ENCODE measurements at regions of chr2 and their contacts with region 1.

Region 1: DNA sequence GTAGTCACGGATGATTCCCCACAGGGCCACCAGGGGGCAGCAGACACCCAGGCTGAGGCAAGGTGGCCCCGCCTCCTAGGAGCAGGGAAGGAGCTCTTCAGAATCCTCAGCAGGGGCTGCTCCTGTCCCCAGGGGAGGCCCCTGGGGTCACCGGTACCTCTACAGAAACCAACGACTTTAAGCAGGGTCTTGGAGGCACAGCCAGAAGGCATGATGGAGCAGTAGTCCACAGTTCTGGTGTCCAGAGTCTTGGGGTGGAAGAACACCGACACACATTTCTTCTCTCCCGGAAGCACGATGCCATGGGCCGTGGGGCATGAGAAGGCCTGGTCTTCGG is 11.5 kb downstream of the CFAP65 start:
- DNase-seq: peak; percentile 68 to 95 (median 88)
- ATAC-seq: peak; percentile 94 to 100 (median 98)
- H3K4me3 ChIP-seq: no peak overlapping the region
- H3K27ac ChIP-seq: no peak overlapping the region
- H3K4me1 ChIP-seq: no peaks in the 10 kb centered on the region
- H3K27me3 ChIP-seq: peaks cover 0 to 5% (median 0%) of the 10 kb centered on the region in 4 donors
- CTCF ChIP-seq: peak; percentile 98 to 99 (median 98)

Region 2: DNA sequence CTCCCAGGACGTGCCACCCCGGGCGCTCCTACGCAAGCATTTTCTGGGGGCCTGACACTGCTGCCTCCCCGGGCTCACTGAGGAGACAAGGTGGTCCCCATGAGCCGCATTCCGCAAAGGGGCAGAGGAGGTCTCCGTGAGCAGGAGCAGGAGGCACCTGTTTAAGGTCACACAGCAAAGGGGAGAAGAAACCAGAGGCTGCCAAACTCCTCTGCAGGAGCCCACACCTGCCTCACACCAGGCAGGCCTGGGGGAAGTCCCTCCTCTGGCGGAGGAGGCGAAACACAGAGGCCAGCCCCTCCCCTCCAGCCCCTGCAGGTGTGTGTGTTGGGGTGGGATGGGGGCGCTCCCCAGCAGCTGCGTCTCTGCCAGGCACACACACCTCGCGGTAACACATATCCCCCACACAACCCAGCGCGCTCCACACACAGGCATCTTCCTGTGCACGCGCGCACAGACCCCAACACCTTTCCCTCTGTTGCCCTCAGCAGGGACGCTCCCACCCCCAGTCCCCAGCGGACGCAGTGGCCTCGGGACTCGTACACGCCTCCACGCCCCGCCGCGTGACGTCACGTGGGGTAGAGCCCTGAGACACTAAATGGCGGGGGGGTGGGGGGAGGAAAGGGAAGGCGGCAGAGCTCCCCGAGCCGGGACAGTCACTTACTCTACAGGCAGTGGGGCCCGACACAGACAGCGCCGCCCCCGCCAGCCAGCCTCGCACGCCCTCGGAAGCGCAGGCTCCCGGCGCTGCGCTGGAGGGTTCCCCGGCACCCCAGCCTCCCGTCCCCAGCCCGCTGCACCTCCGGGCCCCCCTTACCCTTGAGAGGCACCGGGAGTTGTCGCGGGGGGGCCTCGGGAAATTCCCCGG is 149.7 kb before region 1 on chr2:
- intact Hi-C with region 1: no loop called
- DNase-seq: peak in 2 of 6 donors; percentile 37 to 79
- ATAC-seq: peak in 3 of 4 donors; percentile 36 to 66 (median 45)
- H3K4me3 ChIP-seq: peak overlapping the region in 2 of 4 donors; percentile 1 to 35
- H3K27ac ChIP-seq: no peak overlapping the region
- H3K4me1 ChIP-seq: peaks cover 0 to 11% (median 11%) of the 10 kb centered on the region in 3 donors
- H3K27me3 ChIP-seq: peaks cover 0 to 14% (median 2%) of the 10 kb centered on the region in 4 donors
- CTCF ChIP-seq: no peak

Region 3: GRCh38 chr2:219155054-219155644 is 125.4 kb after region 1 on chr2:
- intact Hi-C with region 1: loop called in 1 of 3 experiments (anchors 10 kb)
- DNase-seq: peak in 2 of 6 donors; percentile 49 to 56
- ATAC-seq: peak; percentile 46 to 86 (median 82)
- H3K4me3 ChIP-seq: no peak overlapping the region
- H3K27ac ChIP-seq: no peak overlapping the region
- H3K4me1 ChIP-seq: peaks cover 0 to 4% (median 0%) of the 10 kb centered on the region in 3 donors
- H3K27me3 ChIP-seq: no peaks in the 10 kb centered on the region
- CTCF ChIP-seq: peak; percentile 29 to 59 (median 45)

Region 4: DNA sequence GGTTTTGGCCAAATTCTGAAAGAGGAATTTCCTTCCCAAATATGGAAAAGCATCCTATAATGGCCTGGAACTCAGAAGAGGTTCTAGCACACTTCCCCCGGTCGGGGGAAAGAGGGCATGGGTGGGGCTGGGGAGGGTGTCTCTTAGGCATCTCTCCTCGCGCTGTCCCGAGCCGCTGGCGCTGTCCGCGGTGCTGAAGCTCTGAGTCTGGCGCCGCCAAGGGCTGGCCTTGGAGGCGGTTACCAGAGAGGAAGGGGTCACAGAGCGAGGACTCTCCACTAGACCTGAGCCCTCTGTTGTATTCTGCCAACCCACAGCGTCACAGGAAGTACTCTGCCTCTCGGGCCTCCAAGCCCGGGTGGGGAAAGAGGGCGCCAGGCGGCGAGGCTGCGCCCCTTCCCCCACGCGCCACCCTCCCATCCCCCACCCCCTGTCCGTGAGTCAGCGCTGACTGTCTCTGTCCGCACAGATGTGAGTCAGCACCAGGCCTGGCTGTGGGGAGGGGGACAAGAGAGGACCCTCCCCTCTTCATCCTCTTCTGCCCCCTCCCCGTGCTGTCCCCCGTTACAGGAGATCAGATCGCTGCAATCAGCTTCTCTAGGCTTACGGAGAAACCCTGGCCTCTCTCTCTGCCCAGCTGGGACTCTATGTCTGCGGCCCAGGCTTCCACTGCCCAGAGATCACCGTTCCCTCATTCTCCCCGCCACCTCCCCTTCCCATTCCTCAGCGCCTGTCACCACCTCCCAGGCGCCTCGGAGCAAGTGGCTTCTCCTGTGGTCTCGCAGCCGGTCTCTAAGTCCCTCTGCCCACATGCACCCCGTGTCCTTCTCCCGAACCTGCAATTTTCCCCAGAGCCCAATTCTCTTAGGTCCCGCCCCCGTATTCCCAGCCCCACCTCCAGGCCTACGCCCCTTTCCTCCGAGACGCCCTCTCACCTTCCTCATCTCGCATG is 278.6 kb after region 1 on chr2:
- intact Hi-C with region 1: loop called in 1 of 3 experiments (anchors 10 kb)
- DNase-seq: peak in 5 of 6 donors; percentile 53 to 89 (median 77)
- ATAC-seq: peak; percentile 79 to 97 (median 84)
- H3K4me3 ChIP-seq: peak overlapping the region in 1 of 4 donors; percentile 6
- H3K27ac ChIP-seq: no peak overlapping the region
- H3K4me1 ChIP-seq: no peaks in the 10 kb centered on the region
- H3K27me3 ChIP-seq: peaks cover 0 to 13% (median 2%) of the 10 kb centered on the region in 4 donors
- CTCF ChIP-seq: no peak

Region 5: GRCh38 chr2:219446081-219446521 is 416.3 kb after region 1 on chr2:
- intact Hi-C with region 1: no loop called
- DNase-seq: no peak
- ATAC-seq: peak in 2 of 4 donors; percentile 40 to 45
- H3K4me3 ChIP-seq: no peak overlapping the region
- H3K27ac ChIP-seq: no peak overlapping the region
- H3K4me1 ChIP-seq: no peaks in the 10 kb centered on the region
- H3K27me3 ChIP-seq: peaks cover 0 to 10% (median 1%) of the 10 kb centered on the region in 4 donors
- CTCF ChIP-seq: no peak